Prostate gland (tissue), 2 donors: ENCODE measurements at regions of chr9 and their contacts with region 1.

Region 1: DNA sequence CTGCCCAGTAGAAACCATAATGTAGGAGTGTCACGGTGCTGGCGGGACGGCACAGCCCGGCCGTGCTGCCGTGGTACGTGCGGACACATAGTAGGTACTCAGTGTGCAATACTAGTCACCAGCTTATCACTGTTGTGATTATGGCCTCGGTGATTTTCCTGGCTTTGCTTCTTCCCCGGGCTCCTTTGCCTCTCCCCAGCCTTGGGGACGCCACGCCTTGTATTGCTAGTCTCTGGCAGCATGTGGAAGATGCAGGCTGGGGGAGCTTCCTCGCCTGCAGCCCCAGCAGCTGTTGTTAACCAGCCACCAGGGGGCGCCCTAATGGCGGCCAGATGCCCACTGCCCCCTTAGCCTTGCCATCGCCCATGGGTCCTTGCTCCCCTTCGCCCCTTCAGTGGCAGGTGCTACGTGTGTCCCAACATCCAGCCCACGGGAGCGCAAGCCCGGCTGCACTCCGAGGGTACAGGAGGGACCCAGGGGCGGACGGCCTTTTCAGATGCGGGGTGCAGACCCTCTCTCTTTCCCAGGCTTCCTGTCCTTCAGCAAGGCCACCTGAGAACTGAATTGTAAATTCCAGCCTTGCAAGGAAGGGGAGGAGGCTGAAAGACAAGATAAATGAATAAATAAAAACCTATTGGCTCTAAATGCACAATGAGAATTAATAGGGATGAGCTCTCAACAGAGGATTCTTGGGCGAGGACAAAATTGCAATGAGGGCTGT is 8.0 kb downstream of the NTNG2 start:
- DNase-seq: peak; percentile 42
- H3K4me3 ChIP-seq: no peak overlapping the region
- H3K27ac ChIP-seq: no peak overlapping the region
- H3K4me1 ChIP-seq: peaks cover 8% of the 10 kb centered on the region
- H3K27me3 ChIP-seq: no peaks in the 10 kb centered on the region
- CTCF ChIP-seq: peak; percentile 56 to 89 (median 72)
- POLR2A ChIP-seq: no peak

Region 2: DNA sequence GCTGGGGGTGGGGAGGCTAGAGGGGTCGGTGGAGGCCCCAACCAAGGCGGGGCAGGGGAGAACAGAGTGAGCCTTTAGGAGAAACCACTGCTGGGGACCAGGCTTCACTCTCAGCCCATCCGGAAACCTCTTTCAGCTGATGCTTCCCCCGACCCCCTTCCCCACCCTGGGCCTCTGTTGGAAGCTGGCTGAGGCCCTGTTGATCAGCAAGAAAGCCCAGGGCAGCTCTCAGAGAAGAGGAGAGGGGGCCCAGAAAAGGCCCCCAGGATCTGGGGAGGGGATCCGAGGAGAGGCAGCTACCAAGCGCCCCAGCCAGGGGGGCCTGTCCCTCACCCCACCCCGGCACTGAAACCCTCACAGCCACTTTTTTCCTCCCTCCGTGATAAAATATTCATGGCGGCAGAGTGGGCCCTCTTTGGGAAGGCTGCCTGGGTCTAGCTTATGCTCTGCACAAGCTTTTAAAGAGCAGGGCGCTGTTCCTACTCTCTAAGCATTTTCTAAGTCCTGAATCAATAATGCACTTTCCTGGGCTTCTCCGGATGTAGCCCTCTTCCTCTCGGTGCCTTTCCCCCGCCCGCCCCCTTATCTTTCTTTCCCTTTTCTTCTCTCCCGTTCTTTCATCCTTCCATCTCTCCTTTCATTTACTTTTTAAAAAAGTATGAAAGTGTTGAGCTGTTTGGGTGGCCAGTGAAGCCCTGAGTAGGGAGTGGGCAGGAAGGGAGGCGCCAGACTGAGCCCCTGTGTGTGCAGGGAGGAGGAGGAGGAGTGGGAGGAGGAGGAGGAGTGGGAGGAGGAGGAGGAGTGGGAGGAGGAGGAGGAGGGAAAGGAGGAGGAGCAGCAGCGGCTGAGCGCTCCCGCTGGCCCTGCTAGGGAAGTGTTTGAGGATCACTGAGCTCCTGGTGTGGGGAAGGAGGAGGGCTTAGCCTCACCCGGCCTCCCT is 15.5 kb after region 1 on chr9:
- intact Hi-C with region 1: no loop called
- DNase-seq: no peak
- H3K4me3 ChIP-seq: no peak overlapping the region
- H3K27ac ChIP-seq: no peak overlapping the region
- H3K4me1 ChIP-seq: no peaks in the 10 kb centered on the region
- H3K27me3 ChIP-seq: no peaks in the 10 kb centered on the region
- CTCF ChIP-seq: no peak
- POLR2A ChIP-seq: no peak

Region 3: DNA sequence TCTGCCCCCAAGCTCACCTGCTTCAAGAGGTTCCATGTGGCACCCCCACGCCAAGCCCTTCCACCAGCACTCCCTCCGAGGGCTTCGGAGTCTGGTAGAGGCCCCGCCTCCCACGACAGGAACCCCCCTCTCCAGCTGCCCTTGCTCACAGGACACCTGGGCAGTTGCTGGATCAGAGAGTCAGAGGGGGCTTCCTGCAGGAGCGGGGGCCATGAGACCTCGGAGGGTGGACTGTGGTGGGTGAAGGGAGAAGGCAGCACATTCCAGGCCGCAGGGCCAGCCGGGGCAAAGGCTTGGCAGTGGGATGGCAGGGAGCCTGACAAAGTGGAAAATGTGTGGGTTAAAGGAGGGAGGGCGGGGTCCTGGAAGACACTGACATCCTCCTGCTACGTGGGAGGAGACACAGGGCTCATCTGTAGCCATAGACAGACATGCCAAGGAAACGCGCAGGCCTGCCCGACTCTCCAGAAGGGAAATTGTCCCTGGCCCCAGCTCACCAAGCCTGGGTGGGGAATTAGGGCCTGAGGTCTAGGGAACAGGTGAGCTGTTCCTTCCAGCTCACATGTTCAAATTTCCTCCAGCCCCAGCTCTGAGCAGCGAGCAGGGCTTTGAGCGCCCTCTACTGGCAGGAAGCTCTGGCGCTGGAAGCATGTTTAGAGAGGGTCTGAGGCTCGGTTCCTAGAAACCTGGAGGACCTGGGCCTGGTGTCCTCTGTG is 66.3 kb after region 1 on chr9:
- intact Hi-C with region 1: loop called (anchors 5 kb)
- DNase-seq: peak; percentile 84
- H3K4me3 ChIP-seq: no peak overlapping the region
- H3K27ac ChIP-seq: no peak overlapping the region
- H3K4me1 ChIP-seq: no peaks in the 10 kb centered on the region
- H3K27me3 ChIP-seq: no peaks in the 10 kb centered on the region
- CTCF ChIP-seq: peak; percentile 84 to 92 (median 88)
- POLR2A ChIP-seq: no peak